Caco-2 (cell line): ENCODE measurements at regions of chr10 and their contacts with region 1.

Region 1: DNA sequence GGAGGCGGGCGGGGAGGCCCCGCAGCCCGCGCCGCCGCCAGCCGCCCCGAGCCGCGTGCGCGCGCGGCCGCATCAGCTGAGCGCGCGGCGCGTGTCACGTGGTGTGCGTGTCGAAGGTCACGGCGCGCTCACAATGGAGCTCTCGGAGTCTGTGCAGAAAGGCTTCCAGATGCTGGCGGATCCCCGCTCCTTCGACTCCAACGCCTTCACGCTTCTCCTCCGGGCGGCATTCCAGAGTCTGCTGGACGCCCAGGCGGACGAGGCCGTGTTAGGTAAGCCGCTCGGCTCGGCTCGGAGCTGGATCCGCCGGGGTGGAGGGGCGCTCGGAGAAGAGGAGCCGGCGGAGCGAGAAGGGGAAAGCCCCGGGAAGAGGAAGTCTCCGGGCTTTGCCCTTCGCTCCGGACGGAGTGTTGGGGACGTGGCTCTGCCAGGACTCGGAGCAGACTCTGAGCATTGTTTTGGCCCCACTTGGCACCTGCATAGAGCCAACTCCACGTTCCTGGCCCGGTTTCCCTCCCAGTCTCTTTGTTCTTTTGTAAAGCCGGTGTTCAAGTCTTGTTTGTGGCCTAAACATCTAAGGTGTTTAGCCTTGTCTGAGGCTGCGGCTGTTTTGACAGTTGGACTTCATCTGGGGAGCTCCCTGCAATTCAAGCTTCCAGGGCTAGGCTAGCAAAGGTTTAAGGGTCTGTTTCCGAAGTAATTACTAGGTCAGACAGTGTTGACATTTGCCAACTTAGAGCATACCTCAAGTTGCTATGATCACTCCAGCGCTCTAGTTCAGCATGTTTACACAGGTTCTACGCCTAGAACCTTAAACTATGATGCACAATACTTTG is at the start of gene COMMD3:
- DNase-seq: peak; percentile 89 to 90
- H3K4me3 ChIP-seq: peak within 1 kb of the TSS; percentile 77
- H3K4me3 Mint-ChIP-seq: peak within 1 kb of the TSS; percentile 94
- H3K27ac Mint-ChIP-seq: peak within 1 kb of the TSS; percentile 95
- H3K4me1 ChIP-seq: peaks cover 11% of the 10 kb centered on the region; the same call in 1 of the 2 replicates
- H3K4me1 Mint-ChIP-seq: peaks cover 6% of the 10 kb centered on the region
- H3K27me3 ChIP-seq: no peaks in the 10 kb centered on the region
- H3K27me3 Mint-ChIP-seq: no peaks in the 10 kb centered on the region
- CTCF ChIP-seq: no peak
- total RNA-seq, gene COMMD3: 50.7 and 55.4 TPM in 2 replicates

Region 2: GRCh38 chr10:21989453-21990154 is 326.9 kb before region 1 on chr10:
- CTCF ChIA-PET with region 1: no interaction called
- POLR2A ChIA-PET with region 1: no interaction called
- intact Hi-C with region 1: loop called (anchors 2 kb)
- DNase-seq: peak; percentile 74 to 75
- H3K4me3 ChIP-seq: no peak overlapping the region
- H3K4me3 Mint-ChIP-seq: no peak overlapping the region
- H3K27ac Mint-ChIP-seq: no peak overlapping the region
- H3K4me1 ChIP-seq: peaks cover 3% of the 10 kb centered on the region; the same call in 1 of the 2 replicates
- H3K4me1 Mint-ChIP-seq: peaks cover 7% of the 10 kb centered on the region
- H3K27me3 ChIP-seq: no peaks in the 10 kb centered on the region
- H3K27me3 Mint-ChIP-seq: no peaks in the 10 kb centered on the region
- CTCF ChIP-seq: peak; percentile 73 to 92

Region 3: GRCh38 chr10:22103701-22104470 is 212.6 kb before region 1 on chr10:
- CTCF ChIA-PET with region 1: interaction called, 4 read pairs
- POLR2A ChIA-PET with region 1: no interaction called
- intact Hi-C with region 1: loop called (anchors 10 kb)
- DNase-seq: peak in 1 of 2 experiments; percentile 16
- H3K4me3 ChIP-seq: no peak overlapping the region
- H3K4me3 Mint-ChIP-seq: no peak overlapping the region
- H3K27ac Mint-ChIP-seq: no peak overlapping the region
- H3K4me1 ChIP-seq: no peaks in the 10 kb centered on the region
- H3K4me1 Mint-ChIP-seq: no peaks in the 10 kb centered on the region
- H3K27me3 ChIP-seq: 0 out of 2 replicates have a peak, but pooled peaks cover 1% of the 10 kb centered on the region
- H3K27me3 Mint-ChIP-seq: peaks cover 8% of the 10 kb centered on the region
- CTCF ChIP-seq: peak; percentile 48 to 50

Region 4: GRCh38 chr10:22210277-22210676 is 106.2 kb before region 1 on chr10:
- CTCF ChIA-PET with region 1: no interaction called
- POLR2A ChIA-PET with region 1: no interaction called
- intact Hi-C with region 1: no loop called
- DNase-seq: no peak
- H3K4me3 ChIP-seq: no peak overlapping the region
- H3K4me3 Mint-ChIP-seq: no peak overlapping the region
- H3K27ac Mint-ChIP-seq: no peak overlapping the region
- H3K4me1 ChIP-seq: no peaks in the 10 kb centered on the region
- H3K4me1 Mint-ChIP-seq: no peaks in the 10 kb centered on the region
- H3K27me3 ChIP-seq: no peaks in the 10 kb centered on the region
- H3K27me3 Mint-ChIP-seq: peaks cover 14% of the 10 kb centered on the region
- CTCF ChIP-seq: no peak

Region 5: DNA sequence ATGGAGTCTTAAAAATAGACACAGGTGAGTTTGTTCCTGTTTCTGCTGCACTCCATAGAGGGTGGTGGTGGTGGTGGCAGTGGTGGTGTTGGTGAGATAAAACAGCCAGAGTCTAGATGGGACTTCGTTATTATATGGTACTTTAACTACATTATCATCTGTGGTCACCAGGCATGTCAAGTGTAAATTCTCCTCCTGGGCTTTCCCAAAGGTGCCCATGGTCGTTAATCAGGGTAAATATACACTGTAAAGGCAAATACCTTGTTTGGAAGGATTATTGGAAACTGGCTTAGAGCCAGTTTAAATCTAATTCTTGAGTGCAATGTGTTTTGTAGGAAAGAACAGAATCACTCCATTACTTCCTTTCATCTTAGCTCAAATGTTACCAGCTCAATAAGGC is 21.8 kb before region 1 on chr10:
- CTCF ChIA-PET with region 1: no interaction called
- POLR2A ChIA-PET with region 1: no interaction called
- intact Hi-C with region 1: no loop called
- DNase-seq: no peak
- H3K4me3 ChIP-seq: no peak overlapping the region
- H3K4me3 Mint-ChIP-seq: no peak overlapping the region
- H3K27ac Mint-ChIP-seq: no peak overlapping the region
- H3K4me1 ChIP-seq: no peaks in the 10 kb centered on the region
- H3K4me1 Mint-ChIP-seq: no peaks in the 10 kb centered on the region
- H3K27me3 ChIP-seq: no peaks in the 10 kb centered on the region
- H3K27me3 Mint-ChIP-seq: peaks cover 5% of the 10 kb centered on the region
- CTCF ChIP-seq: no peak

Region 6: GRCh38 chr10:22340362-22341189 is 24.1 kb after region 1 on chr10:
- CTCF ChIA-PET with region 1: interaction called, 6 read pairs
- POLR2A ChIA-PET with region 1: interaction called, 16 read pairs
- intact Hi-C with region 1: loop called (anchors 1 kb)
- DNase-seq: peak; percentile 70 to 82
- H3K4me3 ChIP-seq: peak overlapping the region; percentile 74
- H3K4me3 Mint-ChIP-seq: peak overlapping the region; percentile 91
- H3K27ac Mint-ChIP-seq: peak overlapping the region; percentile 93
- H3K4me1 ChIP-seq: peaks cover 5% of the 10 kb centered on the region; the same call in 1 of the 2 replicates
- H3K4me1 Mint-ChIP-seq: peaks cover 7% of the 10 kb centered on the region
- H3K27me3 ChIP-seq: no peaks in the 10 kb centered on the region; the same call in 1 of the 2 replicates
- H3K27me3 Mint-ChIP-seq: peaks cover 5% of the 10 kb centered on the region
- CTCF ChIP-seq: no peak